ENCODE measurements at regions of chr21 and their contacts with region 1.

Region 1: GRCh38 chr21:31873696-31874599 is 1.1 kb downstream of the HUNK start:
- DNase-seq: peak; percentile 75
- ATAC-seq: peak; percentile 56
- H3K4me3 Mint-ChIP-seq: no peak overlapping the region
- H3K27ac Mint-ChIP-seq: no peak overlapping the region
- H3K4me1 Mint-ChIP-seq: peaks cover 6% of the 10 kb centered on the region
- H3K27me3 Mint-ChIP-seq: peaks cover 48% of the 10 kb centered on the region

Region 2: DNA sequence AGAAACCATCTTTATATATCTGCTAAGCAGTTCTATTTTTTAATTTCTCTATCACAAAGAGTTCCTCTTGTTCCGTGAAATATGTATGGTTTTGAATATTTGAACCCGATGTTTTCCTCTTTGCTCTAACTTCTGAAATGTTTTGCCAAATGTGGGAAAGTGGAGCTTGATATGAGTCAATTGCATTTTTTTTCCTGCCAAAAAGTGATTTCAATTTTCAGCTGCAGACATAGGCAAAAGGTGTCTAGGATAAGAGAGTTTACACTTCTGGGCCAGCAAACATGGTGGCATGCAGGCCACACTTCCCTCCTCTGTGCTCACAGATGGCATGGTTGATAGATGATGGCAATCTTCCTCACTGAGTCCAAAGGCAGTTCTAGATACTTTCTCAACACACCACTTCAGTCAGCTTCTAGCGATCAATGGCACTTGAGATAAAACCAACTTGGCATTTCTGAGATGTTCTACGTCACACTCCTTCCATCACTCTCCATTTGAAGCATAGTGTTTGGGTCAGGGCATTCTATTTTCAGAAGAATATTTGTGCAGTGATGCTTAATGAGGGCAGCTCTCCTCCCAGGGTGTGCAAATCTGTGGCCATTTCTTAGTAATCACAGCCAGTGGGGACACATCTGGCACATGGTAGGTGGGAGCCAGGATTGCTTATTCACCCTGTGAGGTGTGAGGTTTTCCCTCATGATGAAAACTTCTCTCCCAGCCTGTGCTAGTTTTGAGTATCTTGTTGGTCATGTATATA is 87.6 kb before region 1 on chr21:
- CTCF ChIA-PET with region 1: interaction called, 3 read pairs
- POLR2A ChIA-PET with region 1: no interaction called
- intact Hi-C with region 1: loop called in 1 of 2 experiments (anchors 5 kb)
- DNase-seq: no peak
- ATAC-seq: no peak
- H3K4me3 Mint-ChIP-seq: no peak overlapping the region
- H3K27ac Mint-ChIP-seq: no peak overlapping the region
- H3K4me1 Mint-ChIP-seq: peaks cover 4% of the 10 kb centered on the region
- H3K27me3 Mint-ChIP-seq: peaks cover 12% of the 10 kb centered on the region

Region 3: GRCh38 chr21:32278518-32279376 is 404.8 kb after region 1 on chr21 and contains the start of gene MIS18A:
- CTCF ChIA-PET with region 1: no interaction called
- POLR2A ChIA-PET with region 1: no interaction called
- intact Hi-C with region 1: loop called in 1 of 2 experiments (anchors 2 kb)
- DNase-seq: peak; percentile 98
- ATAC-seq: peak; percentile 90
- H3K4me3 Mint-ChIP-seq: peak within 1 kb of the TSS; percentile 86
- H3K27ac Mint-ChIP-seq: peak within 1 kb of the TSS; percentile 84
- H3K4me1 Mint-ChIP-seq: peaks cover 17% of the 10 kb centered on the region
- H3K27me3 Mint-ChIP-seq: no peaks in the 10 kb centered on the region
- total RNA-seq, gene MIS18A: 21.5 to 35.3 TPM

Region 4: GRCh38 chr21:32587120-32587519 is 713.2 kb after region 1 on chr21:
- CTCF ChIA-PET with region 1: no interaction called
- POLR2A ChIA-PET with region 1: no interaction called
- intact Hi-C with region 1: loop called in 1 of 2 experiments (anchors 10 kb)
- DNase-seq: no peak
- ATAC-seq: no peak
- H3K4me3 Mint-ChIP-seq: no peak overlapping the region
- H3K27ac Mint-ChIP-seq: no peak overlapping the region
- H3K4me1 Mint-ChIP-seq: no peaks in the 10 kb centered on the region
- H3K27me3 Mint-ChIP-seq: no peaks in the 10 kb centered on the region